Activated B cell treated with CpG ODN at 0.5 μM for 24 hours (primary cell): ENCODE measurements at regions of chr12 and their contacts with region 1.

Region 1: DNA sequence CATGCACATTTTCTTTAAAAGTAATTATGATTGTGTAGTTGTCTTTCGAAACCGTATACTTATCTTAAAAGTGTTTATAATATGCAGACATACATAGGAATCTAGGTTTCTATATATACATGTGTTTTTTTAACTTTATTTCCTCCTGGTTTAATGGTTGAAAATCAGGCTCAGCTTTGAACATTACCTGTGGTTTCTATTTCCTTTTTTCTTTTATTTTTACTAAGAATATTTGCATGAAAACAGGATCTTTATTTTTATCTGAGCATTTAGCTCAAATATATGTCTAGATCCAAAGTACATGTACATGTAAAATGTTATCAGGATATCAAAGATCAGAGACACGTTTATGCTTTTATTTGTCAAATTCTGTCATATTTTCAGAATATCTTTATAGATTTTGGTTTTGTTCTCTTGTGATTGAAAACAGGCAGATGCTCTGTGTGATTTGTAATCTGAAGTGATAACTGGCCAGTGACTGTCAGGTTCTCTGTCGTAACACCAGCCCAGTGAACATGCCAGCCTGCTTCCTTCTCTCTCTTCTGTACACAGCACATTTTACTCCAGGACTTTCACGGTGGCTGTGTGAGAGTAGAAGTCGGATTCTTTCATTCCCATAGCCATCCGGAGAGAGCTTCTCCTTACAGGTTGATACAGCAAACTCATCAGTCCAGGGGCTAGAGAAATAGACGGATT is 13.7 kb downstream of the TCTN1 start:
- DNase-seq: no peak
- ATAC-seq: peak; percentile 69
- H3K4me3 Mint-ChIP-seq: peak overlapping the region; percentile 71
- H3K27ac Mint-ChIP-seq: peak overlapping the region; percentile 95
- H3K4me1 Mint-ChIP-seq: peaks cover 83% of the 10 kb centered on the region
- H3K27me3 Mint-ChIP-seq: no peaks in the 10 kb centered on the region
- CTCF ChIP-seq: no peak

Region 2: GRCh38 chr12:110613771-110614684 is 13.6 kb before region 1 on chr12 and contains the start of gene TCTN1:
- CTCF ChIA-PET with region 1: no interaction called
- POLR2A ChIA-PET with region 1: interaction called, 11 read pairs
- intact Hi-C with region 1: loop called (anchors 1 kb)
- DNase-seq: peak; percentile 95
- ATAC-seq: peak; percentile 98
- H3K4me3 Mint-ChIP-seq: peak within 1 kb of the TSS; percentile 89
- H3K27ac Mint-ChIP-seq: peak within 1 kb of the TSS; percentile 94
- H3K4me1 Mint-ChIP-seq: peaks cover 57% of the 10 kb centered on the region
- H3K27me3 Mint-ChIP-seq: no peaks in the 10 kb centered on the region
- CTCF ChIP-seq: no peak
- total RNA-seq, gene TCTN1: 22.4 and 29.5 TPM in 2 replicates

Region 3: DNA sequence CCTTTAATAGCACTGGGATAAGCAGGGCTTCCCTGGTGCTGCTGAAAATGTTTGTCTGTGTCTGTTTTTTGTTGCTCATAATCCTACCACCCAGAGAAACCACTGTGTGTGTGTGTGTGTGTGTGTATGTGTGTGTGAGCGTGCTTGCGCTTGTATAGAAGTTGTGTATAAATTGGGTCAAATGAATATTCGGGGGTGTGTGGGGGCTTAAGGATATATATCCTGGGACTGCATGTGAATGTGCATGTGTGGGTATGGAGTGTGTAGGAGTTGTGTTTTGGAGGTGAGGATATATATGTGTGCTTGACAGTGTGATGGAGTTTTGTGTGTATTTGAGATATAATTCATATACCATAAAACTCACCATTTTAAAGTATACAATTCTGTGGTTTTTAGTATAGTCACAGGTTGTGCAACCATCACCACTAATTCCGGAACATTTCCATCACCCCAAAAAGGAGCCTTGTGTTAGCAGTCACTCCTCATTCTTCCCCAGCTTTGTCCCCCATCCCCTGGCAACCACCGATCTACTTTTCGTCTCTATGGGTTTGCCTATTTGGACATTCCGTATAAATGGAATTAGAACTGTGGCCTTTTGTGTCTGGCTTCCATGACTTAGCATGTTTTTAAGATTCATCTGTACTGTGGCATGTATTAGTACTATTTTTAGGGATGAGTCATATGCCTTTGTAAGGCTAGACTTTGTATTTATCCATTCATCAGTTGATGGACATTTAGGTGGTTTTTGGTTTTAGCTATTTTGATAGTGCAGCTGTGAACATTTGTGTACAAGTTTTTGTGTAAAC is 11.9 kb after region 1 on chr12:
- CTCF ChIA-PET with region 1: interaction called, 5 read pairs
- POLR2A ChIA-PET with region 1: interaction called, 9 read pairs
- intact Hi-C with region 1: loop called (anchors 1 kb)
- DNase-seq: no peak
- ATAC-seq: peak; percentile 27
- H3K4me3 Mint-ChIP-seq: peak overlapping the region; percentile 36
- H3K27ac Mint-ChIP-seq: peak overlapping the region; percentile 89
- H3K4me1 Mint-ChIP-seq: peaks cover 98% of the 10 kb centered on the region
- H3K27me3 Mint-ChIP-seq: no peaks in the 10 kb centered on the region
- CTCF ChIP-seq: no peak

Region 4: GRCh38 chr12:110846615-110847566 is 219.2 kb after region 1 on chr12 and contains the start of gene CCDC63:
- CTCF ChIA-PET with region 1: no interaction called
- POLR2A ChIA-PET with region 1: interaction called, 12 read pairs
- intact Hi-C with region 1: no loop called
- DNase-seq: peak; percentile 45
- ATAC-seq: peak; percentile 81
- H3K4me3 Mint-ChIP-seq: peak within 1 kb of the TSS; percentile 87
- H3K27ac Mint-ChIP-seq: no peak within 1 kb of the TSS
- H3K4me1 Mint-ChIP-seq: peaks cover 8% of the 10 kb centered on the region
- H3K27me3 Mint-ChIP-seq: peaks cover 17% of the 10 kb centered on the region
- CTCF ChIP-seq: no peak
- total RNA-seq, gene CCDC63: not detected in 2 replicates